ENCODE measurements at regions of chr4 and their contacts with region 1.

Region 1: GRCh38 chr4:39458505-39459300 is at the starts of genes LIAS and RPL9:
- DNase-seq: peak; percentile 86
- H3K4me3 Mint-ChIP-seq: peak within 1 kb of the TSS; percentile 90
- H3K27ac Mint-ChIP-seq: peak within 1 kb of the TSS; percentile 98
- H3K4me1 Mint-ChIP-seq: peaks cover 9% of the 10 kb centered on the region
- H3K27me3 Mint-ChIP-seq: no peaks in the 10 kb centered on the region
- CTCF ChIP-seq: no peak
- total RNA-seq, gene LIAS: 10.0 and 12.9 TPM in 2 replicates
- total RNA-seq, gene RPL9: 421 and 485 TPM in 2 replicates

Region 2: DNA sequence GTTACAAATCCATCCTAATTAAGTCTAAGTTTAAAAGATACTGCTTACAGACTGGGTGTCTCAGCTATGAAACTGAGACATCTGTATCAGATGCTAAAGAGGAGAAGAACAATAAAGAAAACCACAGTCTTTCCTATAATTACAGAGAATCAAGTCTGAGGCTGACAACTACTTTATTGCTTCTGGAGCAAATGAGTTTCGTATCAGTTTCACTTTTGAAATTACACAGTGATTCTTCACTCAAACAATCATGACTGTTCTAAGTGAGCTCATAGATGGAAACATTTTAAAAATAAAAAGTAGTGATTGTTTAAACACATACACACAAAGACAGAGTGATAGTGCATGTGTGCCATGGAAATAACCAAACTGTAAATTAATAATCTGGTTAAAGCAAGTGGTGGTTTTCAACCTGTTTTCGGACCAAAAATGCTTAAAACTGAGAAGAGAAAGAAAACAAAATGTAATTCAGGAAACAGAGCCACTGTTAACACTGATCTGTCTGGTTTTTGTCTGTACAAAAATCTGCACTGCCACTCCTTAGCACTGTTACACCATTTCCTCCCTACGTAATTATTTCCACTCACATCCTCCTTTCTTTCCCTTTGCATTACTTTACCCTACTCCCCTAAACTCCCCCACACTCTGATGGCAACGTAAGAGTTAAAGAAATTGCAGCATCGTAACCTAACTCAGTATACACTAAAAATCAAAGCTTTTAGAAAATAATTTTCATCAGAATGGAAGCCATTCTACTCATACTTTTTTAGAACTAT is 105.0 kb before region 1 on chr4:
- CTCF ChIA-PET with region 1: no interaction called
- intact Hi-C with region 1: loop called (anchors 10 kb)
- DNase-seq: no peak
- H3K4me3 Mint-ChIP-seq: peak overlapping the region; percentile 66
- H3K27ac Mint-ChIP-seq: peak overlapping the region; percentile 98
- H3K4me1 Mint-ChIP-seq: peaks cover 23% of the 10 kb centered on the region
- H3K27me3 Mint-ChIP-seq: no peaks in the 10 kb centered on the region
- CTCF ChIP-seq: no peak

Measured in Calu3 (cell line).